ENCODE measurements at regions of chr5 and their contacts with region 1.

Region 1: DNA sequence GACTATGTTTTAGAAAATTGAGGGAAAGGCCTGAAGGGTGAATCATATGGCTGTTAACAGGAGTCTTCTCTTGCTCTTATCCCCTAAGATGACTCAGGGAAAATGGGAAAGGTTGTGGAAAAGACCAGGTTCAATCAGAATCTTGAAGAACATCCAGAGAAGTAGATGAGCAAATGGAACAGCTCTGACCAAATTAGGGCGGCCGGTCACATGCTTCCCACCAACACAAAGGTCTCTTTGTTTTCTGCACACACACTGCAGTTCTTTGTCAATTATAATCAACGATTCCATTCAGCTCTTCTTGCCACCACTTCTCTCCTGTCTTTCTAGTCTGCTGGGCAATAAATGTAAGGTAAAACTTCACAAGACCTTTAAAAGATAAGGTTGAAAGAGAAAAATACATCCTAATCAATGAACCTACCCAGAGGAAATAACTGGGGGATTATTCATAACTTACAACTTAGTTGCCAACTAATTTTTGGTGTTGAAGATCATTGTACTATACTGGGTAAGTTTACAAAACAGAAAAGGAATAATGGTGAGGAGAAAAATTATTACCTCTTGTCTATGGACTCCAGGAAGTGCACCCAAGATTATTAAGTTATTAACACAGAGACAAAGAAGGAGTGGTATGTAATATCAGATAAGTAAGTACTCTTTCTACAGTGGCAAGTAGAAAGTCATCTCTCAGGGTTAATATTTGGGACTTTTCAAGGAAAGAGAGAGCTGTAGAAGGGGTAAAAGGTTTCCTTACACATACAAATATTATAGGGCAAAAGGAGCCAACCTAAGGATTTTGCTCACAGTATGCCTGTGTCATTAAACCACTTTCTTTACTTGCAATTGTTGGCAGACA is 441.9 kb upstream of the PIK3R1 start:
- DNase-seq: peak; percentile 92
- ATAC-seq: peak; percentile 51
- H3K4me3 ChIP-seq: peak overlapping the region in 1 of 3 experiments; percentile 24; a peak in 1 of 6 replicates
- H3K27ac ChIP-seq: peak overlapping the region; percentile 92
- H3K4me1 ChIP-seq: peaks cover 70% of the 10 kb centered on the region
- H3K27me3 ChIP-seq: no peaks in the 10 kb centered on the region
- CTCF ChIP-seq: no peak
- EP300 ChIP-seq: peak in 1 of 2 experiments; percentile 77; a peak in 3 of 4 replicates
- POLR2A ChIP-seq: no peak
- RAD21 ChIP-seq: no peak

Region 2: GRCh38 chr5:67246108-67246507 is 527.5 kb before region 1 on chr5:
- CTCF ChIA-PET with region 1: no interaction called
- POLR2A ChIA-PET with region 1: no interaction called
- in situ Hi-C with region 1: no loop called
- intact Hi-C with region 1: loop called (anchors 5 kb)
- DNase-seq: peak; percentile 49
- ATAC-seq: no peak; the same call in 2 of the 3 replicates
- H3K4me3 ChIP-seq: no peak overlapping the region
- H3K27ac ChIP-seq: no peak overlapping the region
- H3K4me1 ChIP-seq: peaks cover 13% of the 10 kb centered on the region
- H3K27me3 ChIP-seq: no peaks in the 10 kb centered on the region
- CTCF ChIP-seq: peak; percentile 71
- EP300 ChIP-seq: no peak
- POLR2A ChIP-seq: no peak
- RAD21 ChIP-seq: peak; percentile 65; the same call in 1 of the 2 replicates

Region 3: DNA sequence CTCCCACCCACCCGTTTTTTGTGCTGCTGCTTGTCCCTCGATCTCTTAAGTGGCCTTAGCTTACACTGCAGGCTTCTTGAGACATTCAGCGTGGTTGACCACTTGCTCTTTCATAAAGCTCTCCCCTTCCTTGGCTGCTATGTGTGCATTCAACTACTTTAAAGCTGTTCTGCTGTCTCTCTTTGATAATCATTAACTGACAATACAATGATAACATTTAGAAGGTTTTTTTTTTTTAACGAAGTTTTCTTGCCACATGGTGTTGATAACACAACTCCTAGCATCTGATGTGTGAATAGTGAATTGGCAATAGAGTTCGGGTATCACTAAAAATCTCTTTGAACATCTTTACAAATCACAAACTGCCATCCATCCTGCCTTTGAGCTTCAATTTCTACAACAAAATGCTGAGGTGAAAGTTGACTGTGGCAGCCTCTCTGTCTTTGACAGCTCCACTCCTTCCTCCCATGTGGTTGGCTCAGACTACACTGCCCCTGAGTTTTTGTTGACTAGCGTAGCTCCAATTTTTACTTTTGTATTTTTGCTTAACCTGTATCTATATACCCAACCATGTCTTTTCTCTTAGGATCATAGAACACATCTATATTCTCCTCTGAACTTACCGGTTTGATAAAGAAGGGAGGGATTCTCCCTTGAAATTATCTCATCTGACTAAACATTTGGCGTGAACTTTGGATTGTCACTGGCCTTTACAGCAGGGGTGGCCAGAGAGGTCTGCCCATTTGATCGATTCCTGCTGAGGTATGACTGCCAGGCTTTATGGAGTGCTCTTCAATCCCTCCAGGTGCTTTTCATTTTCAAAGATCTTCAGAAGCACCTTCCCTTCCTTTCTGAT is 167.7 kb before region 1 on chr5:
- CTCF ChIA-PET with region 1: no interaction called
- POLR2A ChIA-PET with region 1: interaction called, 69 read pairs
- in situ Hi-C with region 1: no loop called
- intact Hi-C with region 1: loop called (anchors 2 kb)
- DNase-seq: peak; percentile 92
- ATAC-seq: peak; percentile 96
- H3K4me3 ChIP-seq: peak overlapping the region; percentile 4 to 54 (median 46); a peak in 5 of 6 replicates
- H3K27ac ChIP-seq: peak overlapping the region; percentile 93
- H3K4me1 ChIP-seq: peaks cover 50% of the 10 kb centered on the region
- H3K27me3 ChIP-seq: no peaks in the 10 kb centered on the region
- CTCF ChIP-seq: no peak
- EP300 ChIP-seq: peak in 1 of 2 experiments; percentile 78; a peak in 2 of 4 replicates
- POLR2A ChIP-seq: peak; percentile 24 to 57; a peak in 2 of 4 replicates
- RAD21 ChIP-seq: no peak

Region 4: GRCh38 chr5:67815455-67816391 is 42.1 kb after region 1 on chr5:
- CTCF ChIA-PET with region 1: no interaction called
- POLR2A ChIA-PET with region 1: interaction called, 3 read pairs
- in situ Hi-C with region 1: no loop called
- intact Hi-C with region 1: loop called (anchors 5 kb)
- DNase-seq: peak; percentile 81
- ATAC-seq: peak; percentile 95
- H3K4me3 ChIP-seq: peak overlapping the region in 2 of 3 experiments; percentile 4 to 25; a peak in 3 of 6 replicates
- H3K27ac ChIP-seq: peak overlapping the region; percentile 62
- H3K4me1 ChIP-seq: peaks cover 29% of the 10 kb centered on the region
- H3K27me3 ChIP-seq: no peaks in the 10 kb centered on the region
- CTCF ChIP-seq: no peak
- EP300 ChIP-seq: peak in 1 of 2 experiments; percentile 91; a peak in 2 of 4 replicates
- POLR2A ChIP-seq: no peak
- RAD21 ChIP-seq: no peak

Region 5: DNA sequence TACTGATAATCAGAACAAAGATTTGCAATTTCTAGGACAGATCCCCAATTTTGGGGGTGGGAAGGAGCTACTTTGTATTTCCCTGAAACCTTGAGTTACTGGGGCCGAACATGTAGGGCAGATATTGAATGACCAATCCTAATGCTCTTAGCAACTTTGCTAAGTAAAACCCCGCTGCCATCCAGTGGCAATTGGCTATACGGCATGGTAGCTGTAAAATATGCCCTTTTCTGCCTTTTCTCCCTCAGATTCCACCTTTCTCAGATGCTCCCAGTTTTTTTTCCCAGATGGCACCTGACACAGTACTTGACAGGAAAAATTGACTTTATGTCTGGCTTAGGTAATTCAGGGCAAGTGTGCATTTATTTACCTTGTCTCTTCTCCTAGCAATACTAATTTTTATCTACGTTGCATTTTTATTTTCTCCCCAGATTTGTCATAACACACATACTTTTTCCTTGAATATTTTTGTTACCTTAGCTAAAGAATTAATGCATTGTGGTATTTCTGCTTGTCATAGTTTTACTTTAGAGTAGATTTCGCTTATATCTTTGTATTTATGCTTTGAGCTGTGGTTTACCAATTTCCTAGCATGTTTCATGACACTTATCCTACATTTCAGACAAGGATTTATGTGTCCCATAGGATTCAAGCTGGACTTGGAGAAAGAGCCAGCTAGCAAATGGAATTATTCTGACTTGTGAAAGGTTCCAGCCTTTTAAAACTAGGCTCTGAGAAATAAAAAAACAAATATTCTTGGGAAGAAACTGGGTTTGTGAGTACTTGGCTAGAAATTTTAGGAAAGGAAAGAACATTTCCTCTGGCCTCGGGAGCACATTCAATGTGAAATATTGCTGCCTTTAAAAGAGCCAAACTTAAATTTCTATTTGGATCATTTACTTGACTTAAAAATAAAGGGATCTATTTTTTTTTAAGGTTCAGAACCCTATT is 479.3 kb after region 1 on chr5:
- CTCF ChIA-PET with region 1: no interaction called
- POLR2A ChIA-PET with region 1: no interaction called
- in situ Hi-C with region 1: no loop called
- intact Hi-C with region 1: loop called (anchors 5 kb)
- DNase-seq: peak; percentile 63
- ATAC-seq: peak; percentile 92
- H3K4me3 ChIP-seq: no peak overlapping the region
- H3K27ac ChIP-seq: no peak overlapping the region
- H3K4me1 ChIP-seq: peaks cover 18% of the 10 kb centered on the region
- H3K27me3 ChIP-seq: no peaks in the 10 kb centered on the region
- CTCF ChIP-seq: peak; percentile 87
- EP300 ChIP-seq: no peak
- POLR2A ChIP-seq: no peak
- RAD21 ChIP-seq: peak; percentile 90

Region 6: DNA sequence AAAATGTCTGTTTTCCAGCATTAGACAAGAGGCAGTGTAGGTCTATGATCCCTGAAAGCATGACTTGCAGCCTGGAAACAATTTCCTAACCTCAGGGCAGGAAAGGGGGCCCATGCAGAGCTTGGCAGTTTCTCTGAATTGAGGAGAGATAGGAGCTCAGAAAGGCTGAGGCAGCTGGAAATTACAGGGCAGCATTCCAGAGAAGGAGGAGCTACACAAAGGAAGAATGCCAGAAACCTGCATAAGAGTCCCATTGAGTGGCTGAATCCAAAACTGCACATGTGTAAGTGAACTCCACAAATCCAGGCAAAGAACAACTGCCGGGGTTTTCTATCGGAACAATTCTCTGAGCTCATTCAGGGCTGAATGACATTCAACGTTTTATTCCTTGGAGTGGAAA is 788.7 kb after region 1 on chr5:
- CTCF ChIA-PET with region 1: no interaction called
- POLR2A ChIA-PET with region 1: no interaction called
- in situ Hi-C with region 1: no loop called
- intact Hi-C with region 1: no loop called
- DNase-seq: no peak
- ATAC-seq: no peak
- H3K4me3 ChIP-seq: no peak overlapping the region
- H3K27ac ChIP-seq: no peak overlapping the region
- H3K4me1 ChIP-seq: no peaks in the 10 kb centered on the region
- H3K27me3 ChIP-seq: no peaks in the 10 kb centered on the region
- CTCF ChIP-seq: no peak
- EP300 ChIP-seq: no peak
- POLR2A ChIP-seq: no peak
- RAD21 ChIP-seq: no peak

Measured in HepG2 (cell line).